ENCODE measurements at regions of chr6 and their contacts with region 1.

Region 1: DNA sequence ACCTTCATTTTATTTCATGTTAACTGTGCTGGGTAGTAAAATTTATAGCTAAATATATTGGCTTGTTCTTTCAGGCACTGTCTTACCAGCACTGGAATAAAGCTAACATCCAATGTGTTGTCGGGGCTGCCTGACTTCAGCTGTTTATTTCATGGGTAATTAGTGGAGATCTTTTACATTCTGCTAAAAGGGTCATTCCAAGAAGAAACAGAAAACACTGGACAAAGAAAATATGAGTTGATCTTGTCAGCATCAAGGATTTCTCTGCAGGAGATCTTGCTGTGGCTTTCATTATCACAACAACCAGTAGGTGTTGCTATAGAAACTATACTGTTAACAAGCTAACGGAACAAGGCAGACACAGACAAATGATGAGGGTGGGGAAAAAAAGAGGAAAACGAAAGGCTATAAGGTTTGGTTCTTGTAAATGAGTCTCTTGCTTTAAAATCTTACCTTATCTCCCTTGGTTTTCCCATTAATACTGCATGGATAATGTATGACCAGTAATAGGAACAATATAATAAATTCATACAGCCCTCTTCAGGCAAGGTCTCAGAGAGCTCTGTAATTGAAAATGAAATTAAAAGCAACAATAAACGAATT is 206.8 kb downstream of the SIM1 start:
- DNase-seq: peak; percentile 46 to 58
- ATAC-seq: peak; percentile 92 to 93
- H3K4me3 ChIP-seq: peak overlapping the region; percentile 10; the same call in 1 of the 3 replicates
- H3K27ac ChIP-seq: peak overlapping the region; percentile 30 to 69
- H3K4me1 ChIP-seq: 0 out of 3 replicates have a peak, but pooled peaks cover 3% of the 10 kb centered on the region
- CTCF ChIP-seq: peak; percentile 44
- EP300 ChIP-seq: no peak
- POLR2A ChIP-seq: no peak
- RAD21 ChIP-seq: peak; percentile 59 to 63

Region 2: DNA sequence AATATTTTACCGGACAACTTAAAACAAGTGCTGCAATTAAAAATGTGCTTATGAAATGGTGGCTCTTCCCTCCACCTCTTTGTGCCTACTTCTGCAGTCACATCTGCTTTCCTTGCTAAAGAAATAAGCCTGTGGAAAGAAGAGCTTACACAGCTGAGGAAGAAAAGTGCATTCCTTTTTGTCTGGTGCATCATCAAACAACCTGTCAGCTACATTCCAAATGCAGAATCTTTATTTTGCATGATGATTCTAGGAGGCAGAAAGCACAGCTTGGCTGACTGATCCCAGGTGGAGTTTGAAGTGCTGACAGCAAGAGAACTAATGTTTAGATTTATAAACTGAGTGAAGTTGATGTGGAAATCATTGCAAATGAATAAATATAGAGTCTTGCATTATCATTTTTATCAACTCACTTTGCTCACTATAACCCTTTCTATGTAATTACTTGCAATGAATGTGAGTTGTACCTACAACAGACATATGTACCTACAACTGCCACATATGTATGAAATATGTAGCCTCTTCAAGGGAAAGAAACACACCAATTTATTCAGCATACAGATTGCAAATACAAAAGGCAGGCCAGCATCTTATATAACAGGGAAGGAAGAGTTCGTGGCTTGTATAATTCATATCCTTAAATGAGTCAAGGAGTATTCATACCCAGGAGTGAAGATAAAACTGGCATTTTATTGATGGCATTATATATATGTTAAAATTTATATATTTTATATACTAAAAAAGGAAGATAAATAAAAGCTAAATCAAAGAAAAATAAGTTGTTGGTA is 40.5 kb before region 1 on chr6:
- CTCF ChIA-PET with region 1: no interaction called
- POLR2A ChIA-PET with region 1: no interaction called
- DNase-seq: no peak
- ATAC-seq: no peak
- H3K4me3 ChIP-seq: no peak overlapping the region
- H3K27ac ChIP-seq: no peak overlapping the region
- H3K4me1 ChIP-seq: peaks cover 3% of the 10 kb centered on the region; the same call in 1 of the 3 replicates
- CTCF ChIP-seq: no peak
- EP300 ChIP-seq: no peak
- POLR2A ChIP-seq: no peak
- RAD21 ChIP-seq: no peak

Region 3: DNA sequence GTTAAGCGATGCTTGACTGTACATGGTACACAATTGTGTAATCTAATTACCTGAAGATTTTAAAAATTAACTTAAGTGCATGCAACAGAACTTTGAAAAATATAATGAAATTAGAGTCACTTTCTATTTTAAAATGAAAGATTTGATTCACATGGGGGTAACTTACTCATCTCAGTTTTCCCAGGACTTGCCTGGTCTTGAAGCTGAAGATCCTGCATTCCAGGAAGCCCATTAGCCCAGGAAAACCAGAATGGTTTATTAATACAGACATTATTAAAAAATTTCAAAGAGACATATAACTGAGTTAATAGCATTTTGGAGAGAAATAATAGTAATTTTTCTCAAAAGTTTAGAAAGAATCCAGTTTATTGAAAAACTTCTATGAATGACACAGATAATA is 16.3 kb after region 1 on chr6:
- CTCF ChIA-PET with region 1: no interaction called
- POLR2A ChIA-PET with region 1: no interaction called
- DNase-seq: no peak
- ATAC-seq: no peak
- H3K4me3 ChIP-seq: no peak overlapping the region
- H3K27ac ChIP-seq: no peak overlapping the region
- H3K4me1 ChIP-seq: peaks cover 9% of the 10 kb centered on the region; the same call in 2 of the 3 replicates
- CTCF ChIP-seq: no peak
- EP300 ChIP-seq: no peak
- POLR2A ChIP-seq: no peak
- RAD21 ChIP-seq: no peak

Region 4: DNA sequence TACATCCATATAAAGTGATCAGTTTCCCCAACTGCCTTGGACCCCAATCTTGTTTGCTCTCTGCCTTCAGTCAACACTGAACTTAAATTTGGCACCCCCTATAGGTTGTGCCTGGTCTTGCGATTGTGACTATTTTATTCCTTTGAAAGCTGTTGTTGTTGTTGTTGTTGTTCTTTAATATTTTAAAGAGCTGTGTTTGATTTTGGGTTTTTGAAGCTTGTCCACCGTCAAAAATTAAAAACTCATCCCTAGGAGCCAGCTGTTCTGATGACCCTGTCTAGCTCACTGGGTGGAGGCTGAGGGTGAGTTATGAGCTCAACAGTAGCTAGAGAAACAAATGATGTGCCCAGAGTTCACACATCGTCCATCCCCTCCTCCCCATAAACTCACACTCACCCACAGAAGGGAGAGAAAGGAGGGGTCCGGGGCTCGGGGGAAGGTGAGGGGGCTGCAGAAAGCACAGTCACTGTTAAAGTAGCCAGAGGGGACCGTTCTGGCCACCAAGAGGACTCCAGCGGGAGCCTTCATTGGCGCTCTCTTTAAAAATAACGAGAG is 202.8 kb after region 1 on chr6:
- CTCF ChIA-PET with region 1: interaction called, 11 read pairs
- POLR2A ChIA-PET with region 1: no interaction called
- DNase-seq: peak; percentile 28 to 37
- ATAC-seq: peak; percentile 77 to 82
- H3K4me3 ChIP-seq: peak overlapping the region; percentile 52
- H3K27ac ChIP-seq: peak overlapping the region; percentile 73 to 85
- H3K4me1 ChIP-seq: peaks cover 6% of the 10 kb centered on the region; the same call in 2 of the 3 replicates
- CTCF ChIP-seq: peak; percentile 58
- EP300 ChIP-seq: no peak
- POLR2A ChIP-seq: no peak
- RAD21 ChIP-seq: peak; percentile 44 to 48; a peak in 4 of 5 replicates